Colonic mucosa (tissue), 4 donors: ENCODE measurements at regions of chr14 and their contacts with region 1.

Region 1: DNA sequence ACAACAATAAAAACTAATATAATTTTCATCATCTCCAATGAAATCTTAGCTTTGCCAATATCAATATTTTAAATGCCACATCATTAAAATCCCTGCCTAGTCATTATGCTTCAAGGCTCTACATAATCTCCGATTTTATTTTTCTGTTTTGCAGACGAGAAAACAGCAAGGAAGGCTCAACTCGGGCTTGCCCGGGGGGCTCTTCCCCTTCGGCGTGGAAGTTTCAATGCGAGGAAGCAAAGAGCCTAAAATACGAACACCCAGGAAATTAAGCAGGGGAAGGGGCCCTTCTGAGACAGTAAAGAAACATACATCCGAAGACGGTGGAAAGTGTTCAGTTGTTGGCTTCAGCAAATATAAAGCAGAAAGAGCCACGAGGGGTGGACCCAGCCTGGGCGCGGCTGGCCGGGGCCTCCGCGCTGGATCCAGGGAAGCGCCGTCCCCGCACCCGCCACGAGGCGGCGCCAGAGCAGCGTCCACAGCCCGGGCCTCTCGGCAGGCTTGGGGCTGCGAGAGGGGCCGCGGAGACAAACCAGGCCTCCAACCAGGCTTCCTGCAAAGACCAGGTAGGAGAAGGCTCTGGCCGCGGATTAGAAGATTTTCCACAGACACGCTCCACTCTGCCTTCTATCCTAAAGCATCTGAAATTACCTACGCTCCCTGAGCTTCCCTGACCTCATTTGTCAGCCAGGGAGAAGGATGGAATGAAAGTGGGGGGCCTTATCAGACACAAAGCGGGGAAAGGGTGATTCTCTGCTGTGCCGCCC is 77.2 kb downstream of the SERPINA3 start:
- DNase-seq: peak; percentile 48
- H3K4me3 ChIP-seq: no peak overlapping the region
- H3K27ac ChIP-seq: no peak overlapping the region
- H3K4me1 ChIP-seq: no peaks in the 10 kb centered on the region
- H3K27me3 ChIP-seq: no peaks in the 10 kb centered on the region
- CTCF ChIP-seq: peak; percentile 91

Region 2: GRCh38 chr14:94423453-94424056 is 265.8 kb before region 1 on chr14:
- intact Hi-C with region 1: loop called (anchors 10 kb)
- DNase-seq: peak; percentile 68
- H3K4me3 ChIP-seq: no peak overlapping the region
- H3K27ac ChIP-seq: no peak overlapping the region
- H3K4me1 ChIP-seq: no peaks in the 10 kb centered on the region
- H3K27me3 ChIP-seq: peaks cover 3% of the 10 kb centered on the region
- CTCF ChIP-seq: peak; percentile 31

Region 3: GRCh38 chr14:95098984-95099599 is 409.7 kb after region 1 on chr14:
- intact Hi-C with region 1: loop called (anchors 5 kb)
- DNase-seq: peak; percentile 65
- H3K4me3 ChIP-seq: no peak overlapping the region
- H3K27ac ChIP-seq: no peak overlapping the region
- H3K4me1 ChIP-seq: no peaks in the 10 kb centered on the region
- H3K27me3 ChIP-seq: no peaks in the 10 kb centered on the region
- CTCF ChIP-seq: peak; percentile 45

Region 4: DNA sequence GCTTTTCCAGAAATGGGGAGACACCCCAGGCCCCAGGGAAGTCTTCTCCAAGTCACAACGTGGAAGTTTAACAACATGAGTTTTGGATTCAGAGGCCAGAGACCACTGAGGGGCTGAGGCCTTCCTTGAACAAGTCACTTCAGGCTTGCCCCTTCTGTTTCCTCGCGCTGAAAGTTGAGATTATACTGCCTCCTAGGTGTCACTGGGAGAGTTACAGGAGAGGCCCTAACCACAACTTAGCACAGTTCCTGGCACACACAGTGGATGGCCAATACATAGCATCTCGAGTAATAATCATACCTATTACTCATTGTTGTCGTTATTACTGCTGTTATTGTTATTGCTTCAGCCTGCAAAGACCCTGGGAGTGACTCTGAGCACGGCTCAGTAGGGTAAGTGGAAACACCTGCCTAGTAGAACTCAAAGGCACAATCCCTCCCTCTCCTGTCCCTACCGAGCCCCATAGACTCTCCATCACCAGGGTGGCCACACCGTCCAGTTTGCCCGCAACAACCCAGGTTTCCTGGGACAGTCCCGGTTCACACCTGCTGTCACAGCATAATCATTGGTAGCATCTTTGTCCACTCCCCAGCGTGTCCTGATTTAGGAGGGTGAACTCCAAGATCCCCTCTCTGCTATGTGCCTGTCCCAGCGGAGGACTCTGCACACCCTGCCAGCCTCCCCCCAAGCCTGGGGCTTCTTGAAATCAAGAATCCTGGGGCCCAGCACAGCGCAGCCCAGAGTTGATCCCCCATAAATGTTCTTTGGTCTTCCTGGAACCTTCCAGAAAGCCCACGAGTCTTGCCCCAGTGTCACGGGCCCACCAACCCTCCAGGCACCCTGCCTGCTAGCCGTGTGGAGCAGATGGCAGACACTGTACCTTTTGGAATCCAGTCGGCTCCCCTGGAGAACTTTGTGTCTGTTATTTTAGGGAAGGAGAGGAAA is 742.1 kb after region 1 on chr14:
- intact Hi-C with region 1: loop called (anchors 5 kb)
- DNase-seq: peak; percentile 27
- H3K4me3 ChIP-seq: no peak overlapping the region
- H3K27ac ChIP-seq: no peak overlapping the region
- H3K4me1 ChIP-seq: no peaks in the 10 kb centered on the region
- H3K27me3 ChIP-seq: no peaks in the 10 kb centered on the region
- CTCF ChIP-seq: peak; percentile 42